AG04449 (cell line): ENCODE measurements at regions of chr11 and their contacts with region 1.

Region 1: GRCh38 chr11:8964324-8965320 is at the start of gene TMEM9B:
- DNase-seq: no peak
- H3K4me3 ChIP-seq: peak within 1 kb of the TSS; percentile 87
- CTCF ChIP-seq: no peak

Region 2: GRCh38 chr11:8523396-8523795 is 441.2 kb before region 1 on chr11:
- CTCF ChIA-PET with region 1: no interaction called
- POLR2A ChIA-PET with region 1: no interaction called
- DNase-seq: no peak
- H3K4me3 ChIP-seq: no peak overlapping the region
- CTCF ChIP-seq: no peak

Region 3: GRCh38 chr11:8777907-8778767 is 186.5 kb before region 1 on chr11:
- CTCF ChIA-PET with region 1: interaction called, 11 read pairs
- POLR2A ChIA-PET with region 1: no interaction called
- DNase-seq: no peak
- H3K4me3 ChIP-seq: no peak overlapping the region
- CTCF ChIP-seq: no peak

Region 4: GRCh38 chr11:8832571-8833260 is 131.9 kb before region 1 on chr11:
- CTCF ChIA-PET with region 1: interaction called, 14 read pairs
- POLR2A ChIA-PET with region 1: no interaction called
- DNase-seq: no peak
- H3K4me3 ChIP-seq: peak overlapping the region; percentile 12; the same call in 1 of the 2 replicates
- CTCF ChIP-seq: no peak

Region 5: GRCh38 chr11:8911029-8911826 is 53.4 kb before region 1 on chr11 and contains the start of gene AKIP1:
- CTCF ChIA-PET with region 1: interaction called, 83 read pairs
- POLR2A ChIA-PET with region 1: interaction called, 4 read pairs
- DNase-seq: no peak
- H3K4me3 ChIP-seq: peak within 1 kb of the TSS; percentile 85
- CTCF ChIP-seq: no peak

Region 6: DNA sequence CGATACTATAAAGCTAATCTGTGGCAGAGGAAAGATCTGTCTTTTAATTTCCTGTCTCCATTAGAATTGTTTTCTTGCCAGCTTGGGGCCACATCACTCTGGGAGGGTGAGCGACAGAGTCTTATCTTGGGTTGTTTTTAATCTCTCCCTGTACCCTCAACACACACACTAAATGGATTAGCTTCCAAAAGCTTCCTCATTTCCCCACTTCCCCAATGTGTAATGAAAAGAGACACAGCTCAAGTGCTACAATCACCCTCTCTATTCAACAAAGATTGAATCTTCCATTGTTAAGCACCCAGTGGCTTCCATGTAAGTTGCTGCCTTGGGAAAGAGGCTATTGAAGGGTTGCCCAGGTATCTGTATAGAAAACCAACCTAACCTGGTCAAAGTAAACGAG is 15.7 kb before region 1 on chr11:
- CTCF ChIA-PET with region 1: interaction called, 55 read pairs
- POLR2A ChIA-PET with region 1: no interaction called
- DNase-seq: no peak
- H3K4me3 ChIP-seq: no peak overlapping the region
- CTCF ChIP-seq: no peak